ENCODE measurements at regions of chr16 and their contacts with region 1.

Region 1: GRCh38 chr16:22001591-22001990 is 675 bp upstream of the PDZD9 start:
- DNase-seq: peak; percentile 70
- H3K4me3 ChIP-seq: no peak overlapping the region
- H3K27ac ChIP-seq: peak overlapping the region; percentile 51
- H3K4me1 ChIP-seq: peaks cover 33% of the 10 kb centered on the region
- H3K27me3 ChIP-seq: no peaks in the 10 kb centered on the region
- CTCF ChIP-seq: no peak

Region 2: DNA sequence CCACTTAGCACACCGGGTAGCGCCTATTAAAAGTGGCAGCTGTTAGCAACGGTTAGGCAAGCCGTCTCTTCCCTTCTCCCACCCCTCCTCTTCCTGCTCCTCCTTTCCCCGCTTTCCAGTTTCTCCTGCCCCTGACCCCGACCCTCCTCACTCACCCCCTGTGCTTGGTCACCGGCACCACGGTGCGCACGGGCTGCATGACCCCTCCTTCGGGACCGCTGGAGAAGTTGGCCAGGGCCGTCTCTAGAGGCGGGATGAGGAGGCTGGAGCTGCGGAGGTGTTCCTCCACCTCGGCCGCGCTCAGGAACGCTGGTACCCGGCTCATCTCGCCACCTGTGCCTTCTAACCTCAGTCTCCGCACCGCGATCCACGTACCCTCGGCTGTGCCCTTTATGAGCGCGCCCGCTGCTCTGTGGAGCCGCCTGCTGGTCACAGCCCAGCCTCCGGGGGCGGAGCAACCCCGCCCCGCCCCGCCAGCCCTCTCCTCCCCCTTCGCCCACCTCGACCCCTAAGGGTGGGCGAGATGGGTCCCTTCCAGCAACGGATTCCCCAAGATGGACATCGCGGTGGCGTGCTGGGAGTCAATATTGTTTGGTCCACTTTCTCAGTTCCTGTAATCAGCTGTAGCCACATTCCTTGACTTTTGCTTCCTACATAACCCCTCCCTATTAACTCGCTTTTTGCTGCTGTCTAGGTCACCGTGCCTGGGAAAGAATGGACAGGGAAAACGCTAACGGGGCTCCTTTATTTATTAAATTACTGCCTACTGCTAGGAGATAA is 723.5 kb before region 1 on chr16 and contains the start of gene CRYM:
- CTCF ChIA-PET with region 1: no interaction called
- dilution Hi-C with region 1: no loop called
- in situ Hi-C with region 1: no loop called
- intact Hi-C with region 1: no loop called
- DNase-seq: peak; percentile 30
- H3K4me3 ChIP-seq: peak within 1 kb of the TSS; percentile 34 to 51 (median 51)
- H3K27ac ChIP-seq: no peak within 1 kb of the TSS
- H3K4me1 ChIP-seq: peaks cover 5% of the 10 kb centered on the region
- H3K27me3 ChIP-seq: peaks cover 6% of the 10 kb centered on the region
- CTCF ChIP-seq: peak; percentile 41 to 90
- total RNA-seq, gene CRYM: 0.17 to 0.54 TPM

Region 3: GRCh38 chr16:21952040-21952792 is 49.4 kb before region 1 on chr16:
- CTCF ChIA-PET with region 1: no interaction called
- dilution Hi-C with region 1: no loop called
- in situ Hi-C with region 1: no loop called
- intact Hi-C with region 1: no loop called
- DNase-seq: peak; percentile 70
- H3K4me3 ChIP-seq: peak overlapping the region; percentile 83 to 99 (median 96)
- H3K27ac ChIP-seq: peak overlapping the region; percentile 99
- H3K4me1 ChIP-seq: peaks cover 23% of the 10 kb centered on the region
- H3K27me3 ChIP-seq: no peaks in the 10 kb centered on the region
- CTCF ChIP-seq: no peak

Region 4: DNA sequence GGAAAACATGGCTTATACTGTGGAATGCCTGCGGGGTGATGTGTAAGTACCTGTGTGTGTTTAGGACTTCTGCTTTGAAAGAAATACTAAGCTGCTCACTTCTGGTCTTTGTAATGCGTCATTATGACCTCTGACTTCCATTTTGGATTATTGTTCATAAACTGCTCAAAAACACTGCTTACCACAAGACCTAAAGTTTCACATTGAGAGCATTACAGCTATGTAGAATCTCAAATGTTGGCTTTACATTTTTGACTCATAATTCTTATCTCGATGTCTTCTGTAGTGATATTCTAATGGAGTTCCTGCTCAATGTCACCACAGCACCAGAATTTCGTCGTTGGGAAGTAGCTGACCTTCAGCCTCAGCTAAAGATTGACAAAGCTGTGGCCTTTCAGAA is 39.1 kb before region 1 on chr16:
- CTCF ChIA-PET with region 1: no interaction called
- dilution Hi-C with region 1: loop called (anchors 5 kb)
- in situ Hi-C with region 1: no loop called
- intact Hi-C with region 1: no loop called
- DNase-seq: no peak
- H3K4me3 ChIP-seq: no peak overlapping the region
- H3K27ac ChIP-seq: no peak overlapping the region
- H3K4me1 ChIP-seq: no peaks in the 10 kb centered on the region
- H3K27me3 ChIP-seq: no peaks in the 10 kb centered on the region
- CTCF ChIP-seq: no peak

Region 5: DNA sequence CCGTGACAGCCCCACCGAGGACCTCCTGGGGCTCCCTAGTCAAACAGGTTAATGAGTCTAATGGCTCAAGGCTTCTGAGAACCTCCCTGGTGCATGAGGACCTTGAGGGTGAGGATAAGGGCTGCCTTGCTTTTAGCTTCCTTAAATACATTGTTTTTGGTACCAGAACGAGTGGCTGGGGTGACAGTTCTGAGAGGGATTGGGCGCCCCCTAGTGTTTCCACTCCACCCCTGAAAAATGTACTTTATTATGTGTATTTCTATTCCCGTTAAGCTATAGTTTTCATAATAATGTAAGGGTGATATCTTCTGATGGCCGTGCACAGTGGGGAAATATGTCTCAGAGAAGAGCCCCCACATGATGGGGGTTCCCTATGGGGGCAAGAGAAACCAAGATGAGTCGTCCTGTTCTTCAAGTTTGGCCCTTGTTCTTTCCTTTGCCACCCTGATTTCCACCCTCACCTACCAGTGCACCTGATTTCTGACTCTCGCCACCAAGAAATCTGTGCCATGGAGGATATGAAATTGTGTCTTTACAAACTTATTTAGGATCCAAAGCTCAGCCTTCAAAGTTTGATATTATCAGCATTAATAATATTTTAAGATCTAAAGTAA is 76.2 kb after region 1 on chr16:
- CTCF ChIA-PET with region 1: interaction called, 31 read pairs
- dilution Hi-C with region 1: no loop called
- in situ Hi-C with region 1: loop called in 1 of 2 experiments (anchors 5 kb)
- intact Hi-C with region 1: loop called (anchors 1 kb)
- DNase-seq: peak; percentile 37
- H3K4me3 ChIP-seq: no peak overlapping the region
- H3K27ac ChIP-seq: no peak overlapping the region
- H3K4me1 ChIP-seq: peaks cover 25% of the 10 kb centered on the region
- H3K27me3 ChIP-seq: no peaks in the 10 kb centered on the region
- CTCF ChIP-seq: peak; percentile 60 to 80

Region 6: DNA sequence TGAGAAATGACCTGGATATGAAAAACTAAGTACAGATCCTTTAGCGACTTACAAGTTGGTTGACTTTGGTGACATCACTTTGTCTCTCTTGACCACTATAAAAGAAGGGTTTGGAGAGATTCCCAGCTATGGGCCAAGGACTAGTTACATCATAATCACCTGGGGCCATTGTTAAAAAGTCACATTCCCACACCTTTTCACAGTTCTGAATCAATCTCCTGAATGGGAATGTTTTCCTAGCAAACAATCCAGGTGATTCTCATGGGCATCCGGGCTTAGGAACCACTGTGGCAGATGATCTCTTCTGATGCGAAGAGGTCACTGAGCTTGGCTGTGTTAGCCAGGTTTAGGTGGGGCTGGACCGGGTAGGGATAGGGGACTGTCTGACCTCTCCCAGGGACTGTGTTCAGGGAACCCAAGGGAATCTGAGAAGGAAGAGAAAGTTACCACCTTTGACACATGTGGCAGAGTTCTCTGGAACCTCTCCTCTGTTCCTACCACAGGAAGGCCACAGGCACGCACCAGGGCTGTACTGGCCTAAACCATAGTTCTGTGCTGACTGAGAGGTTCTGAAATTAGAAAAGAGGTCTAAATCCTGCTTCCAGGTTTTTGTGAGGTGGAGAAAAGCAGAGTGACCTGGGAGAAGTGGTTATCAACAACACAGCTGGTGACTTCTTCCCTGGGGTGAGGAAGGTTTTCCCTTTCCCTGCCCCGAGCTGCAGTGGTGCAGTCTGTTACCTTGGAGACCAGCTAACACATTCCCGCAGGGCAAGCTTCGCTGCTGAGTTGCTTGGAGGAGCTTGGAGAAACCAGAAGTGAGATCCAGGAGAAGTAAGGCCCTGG is 90.4 kb after region 1 on chr16 and contains the start of gene VWA3A:
- CTCF ChIA-PET with region 1: no interaction called
- dilution Hi-C with region 1: no loop called
- in situ Hi-C with region 1: loop called (anchors 5 kb)
- intact Hi-C with region 1: no loop called
- DNase-seq: no peak
- H3K4me3 ChIP-seq: no peak within 1 kb of the TSS
- H3K27ac ChIP-seq: no peak within 1 kb of the TSS
- H3K4me1 ChIP-seq: no peaks in the 10 kb centered on the region
- H3K27me3 ChIP-seq: no peaks in the 10 kb centered on the region
- CTCF ChIP-seq: no peak
- total RNA-seq, gene VWA3A: not detected

Region 7: DNA sequence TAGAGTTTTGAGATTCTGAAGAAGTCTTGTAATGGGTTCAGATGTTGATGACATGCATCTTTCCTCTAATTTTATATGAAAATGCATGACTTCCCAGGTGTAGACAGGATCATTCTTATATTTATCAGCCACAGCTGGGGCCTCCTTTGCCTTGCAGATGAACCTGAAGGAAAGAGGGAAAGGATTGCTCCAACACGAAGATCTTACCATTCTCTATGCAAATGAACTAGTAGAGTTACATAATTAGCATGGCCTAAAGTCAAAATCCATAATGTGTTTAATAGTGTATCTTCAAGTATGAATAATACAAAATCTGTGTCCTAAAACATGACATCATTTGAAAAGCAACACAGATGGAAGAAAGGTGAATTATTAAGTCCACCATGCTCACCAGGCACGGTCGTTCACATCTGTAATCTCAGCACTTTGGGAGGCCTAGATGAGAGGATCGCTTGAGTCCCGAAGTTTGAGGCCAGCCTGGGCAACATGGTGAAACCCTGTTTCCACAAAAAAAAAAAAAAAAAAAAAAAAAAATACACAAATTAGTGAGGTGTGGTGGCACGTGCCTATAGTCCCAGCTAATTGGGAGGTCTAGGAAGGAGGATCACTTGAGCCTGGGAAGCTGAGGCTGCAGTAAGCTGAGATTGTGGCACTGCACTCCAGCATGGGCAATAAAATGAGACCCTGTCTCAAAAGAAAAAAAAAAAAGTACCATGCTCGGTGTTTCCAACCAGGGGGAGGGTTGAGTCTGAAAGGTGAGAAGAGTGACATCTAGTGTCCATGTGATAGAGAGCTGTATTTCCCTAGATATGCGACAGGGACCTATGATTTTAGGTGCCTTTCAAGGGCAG is 97.0 kb after region 1 on chr16:
- CTCF ChIA-PET with region 1: no interaction called
- dilution Hi-C with region 1: no loop called
- in situ Hi-C with region 1: loop called (anchors 5 kb)
- intact Hi-C with region 1: loop called (anchors 1 kb)
- DNase-seq: peak; percentile 42
- H3K4me3 ChIP-seq: peak overlapping the region in 1 of 3 experiments; percentile 15
- H3K27ac ChIP-seq: no peak overlapping the region
- H3K4me1 ChIP-seq: no peaks in the 10 kb centered on the region
- H3K27me3 ChIP-seq: no peaks in the 10 kb centered on the region
- CTCF ChIP-seq: peak; percentile 77 to 84

Measured in mammary epithelial cell (primary cell).